Gastrocnemius medialis (tissue), 4 donors: ENCODE measurements at regions of chr18 and their contacts with region 1.

Region 1: GRCh38 chr18:24212939-24213338 is 74.1 kb downstream of the CABYR start:
- DNase-seq: peak; percentile 43 to 50
- ATAC-seq: peak; percentile 99 to 100
- H3K4me3 ChIP-seq: no peak overlapping the region
- H3K27ac ChIP-seq: peak overlapping the region; percentile 56 to 82 (median 72)
- H3K4me1 ChIP-seq: peaks cover 38 to 43% of the 10 kb centered on the region in 2 donors
- H3K27me3 ChIP-seq: no peaks in the 10 kb centered on the region
- CTCF ChIP-seq: no peak
- POLR2A ChIP-seq: no peak

Region 2: GRCh38 chr18:23586249-23587196 is 626.4 kb before region 1 on chr18 and contains the start of gene NPC1:
- in situ Hi-C with region 1: no loop called
- intact Hi-C with region 1: loop called (anchors 10 kb)
- DNase-seq: peak; percentile 87 to 89
- ATAC-seq: peak; percentile 91 to 93
- H3K4me3 ChIP-seq: peak within 1 kb of the TSS; percentile 77 to 97 (median 90)
- H3K27ac ChIP-seq: peak within 1 kb of the TSS; percentile 95 to 99 (median 97)
- H3K4me1 ChIP-seq: peaks cover 20 to 22% of the 10 kb centered on the region in 2 donors
- H3K27me3 ChIP-seq: no peaks in the 10 kb centered on the region
- CTCF ChIP-seq: peak; percentile 68 to 97 (median 90)
- POLR2A ChIP-seq: peak; percentile 94
- total RNA-seq, gene NPC1: 35.7 to 99.4 (median 46.2) TPM

Region 3: GRCh38 chr18:24160086-24160485 is 52.9 kb before region 1 on chr18:
- in situ Hi-C with region 1: loop called in 1 of 4 experiments (anchors 10 kb)
- intact Hi-C with region 1: no loop called
- DNase-seq: no peak
- ATAC-seq: no peak
- H3K4me3 ChIP-seq: no peak overlapping the region
- H3K27ac ChIP-seq: no peak overlapping the region
- H3K4me1 ChIP-seq: peaks cover 0 to 5% of the 10 kb centered on the region in 2 donors
- H3K27me3 ChIP-seq: no peaks in the 10 kb centered on the region
- CTCF ChIP-seq: no peak
- POLR2A ChIP-seq: no peak

Region 4: DNA sequence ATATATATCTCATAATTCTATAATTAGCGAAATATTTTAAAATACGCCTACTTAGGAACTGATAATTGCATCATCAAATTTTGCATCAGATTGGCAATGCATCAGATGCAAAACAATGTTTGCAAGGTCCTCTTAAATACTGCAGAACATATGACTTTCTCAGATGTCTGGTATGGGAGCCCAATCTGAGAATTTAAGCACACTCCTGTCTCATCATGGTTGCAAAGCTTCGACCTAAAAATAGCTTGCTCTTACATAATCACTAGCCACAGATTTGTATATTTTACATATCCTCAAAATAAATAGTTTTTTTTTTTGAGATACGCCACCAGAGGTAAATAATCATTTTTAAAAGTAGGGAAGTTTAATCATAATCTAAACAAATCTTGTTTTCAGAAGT is 49.1 kb after region 1 on chr18:
- in situ Hi-C with region 1: loop called in 1 of 4 experiments (anchors 10 kb)
- intact Hi-C with region 1: no loop called
- DNase-seq: no peak
- ATAC-seq: peak; percentile 79 to 84
- H3K4me3 ChIP-seq: no peak overlapping the region
- H3K27ac ChIP-seq: peak overlapping the region; percentile 47 to 94 (median 77)
- H3K4me1 ChIP-seq: peaks cover 51 to 61% of the 10 kb centered on the region in 2 donors
- H3K27me3 ChIP-seq: no peaks in the 10 kb centered on the region
- CTCF ChIP-seq: no peak
- POLR2A ChIP-seq: no peak

Region 5: DNA sequence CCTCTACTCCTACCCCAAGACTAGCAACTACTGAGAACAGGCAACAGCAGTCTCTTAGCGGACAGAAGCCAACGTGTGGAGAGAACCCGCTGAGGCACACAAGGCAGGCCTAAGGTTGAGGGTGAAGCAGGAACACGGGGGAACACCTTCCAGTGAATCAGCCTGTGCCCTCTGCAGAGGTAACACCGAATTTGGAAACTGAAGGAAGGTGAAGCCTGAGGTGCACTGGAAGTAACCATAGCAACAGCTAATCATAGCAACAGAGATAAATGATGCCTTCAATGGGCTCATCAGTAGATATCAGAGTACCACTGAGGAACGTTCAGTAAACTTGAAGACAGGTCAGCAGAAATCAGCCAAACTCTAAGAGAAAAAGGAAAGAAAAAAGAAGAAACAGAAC is 141.3 kb after region 1 on chr18:
- in situ Hi-C with region 1: no loop called
- intact Hi-C with region 1: no loop called
- DNase-seq: no peak
- ATAC-seq: no peak
- H3K4me3 ChIP-seq: no peak overlapping the region
- H3K27ac ChIP-seq: no peak overlapping the region
- H3K4me1 ChIP-seq: no peaks in the 10 kb centered on the region
- H3K27me3 ChIP-seq: no peaks in the 10 kb centered on the region
- CTCF ChIP-seq: no peak
- POLR2A ChIP-seq: no peak